Sigmoid colon (tissue), 7 donors: ENCODE measurements at regions of chr3 and their contacts with region 1.

Region 1: DNA sequence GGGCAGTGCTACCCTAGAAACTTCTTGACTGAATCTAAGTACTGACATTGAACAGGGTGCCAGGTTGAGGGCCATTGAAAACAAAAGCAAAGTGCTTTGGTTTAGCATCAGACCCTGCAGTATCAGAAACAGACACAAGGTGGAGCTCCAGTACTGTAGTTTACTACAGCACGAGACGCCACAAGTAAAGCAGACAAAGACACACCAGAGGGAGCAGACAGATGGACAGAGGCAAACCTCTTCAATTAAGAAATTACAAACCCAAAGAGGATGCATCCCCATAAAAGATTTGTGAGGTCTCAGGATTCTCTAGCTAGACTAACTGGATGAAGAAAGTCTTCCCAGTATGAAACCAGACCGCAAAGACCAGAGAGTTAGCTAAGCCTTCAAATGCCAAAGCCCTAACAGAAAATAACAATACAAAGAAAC is 16.6 kb downstream of the TOP2B start:
- DNase-seq: peak; percentile 73
- H3K4me3 ChIP-seq: no peak overlapping the region
- H3K27ac ChIP-seq: no peak overlapping the region
- H3K4me1 ChIP-seq: peaks cover 0 to 38% (median 8%) of the 10 kb centered on the region in 4 donors
- H3K27me3 ChIP-seq: no peaks in the 10 kb centered on the region
- CTCF ChIP-seq: peak; percentile 76 to 95 (median 86)
- EP300 ChIP-seq: no peak
- POLR2A ChIP-seq: no peak

Region 2: GRCh38 chr3:25468866-25469319 is 179.2 kb before region 1 on chr3:
- intact Hi-C with region 1: no loop called
- DNase-seq: peak; percentile 89
- H3K4me3 ChIP-seq: no peak overlapping the region
- H3K27ac ChIP-seq: peak overlapping the region in 3 of 4 donors; percentile 49 to 72 (median 71)
- H3K4me1 ChIP-seq: peaks cover 0 to 63% (median 57%) of the 10 kb centered on the region in 4 donors
- H3K27me3 ChIP-seq: no peaks in the 10 kb centered on the region
- CTCF ChIP-seq: peak in 1 of 4 experiments; percentile 35
- EP300 ChIP-seq: peak in 1 of 4 donors; percentile 28
- POLR2A ChIP-seq: no peak

Region 3: DNA sequence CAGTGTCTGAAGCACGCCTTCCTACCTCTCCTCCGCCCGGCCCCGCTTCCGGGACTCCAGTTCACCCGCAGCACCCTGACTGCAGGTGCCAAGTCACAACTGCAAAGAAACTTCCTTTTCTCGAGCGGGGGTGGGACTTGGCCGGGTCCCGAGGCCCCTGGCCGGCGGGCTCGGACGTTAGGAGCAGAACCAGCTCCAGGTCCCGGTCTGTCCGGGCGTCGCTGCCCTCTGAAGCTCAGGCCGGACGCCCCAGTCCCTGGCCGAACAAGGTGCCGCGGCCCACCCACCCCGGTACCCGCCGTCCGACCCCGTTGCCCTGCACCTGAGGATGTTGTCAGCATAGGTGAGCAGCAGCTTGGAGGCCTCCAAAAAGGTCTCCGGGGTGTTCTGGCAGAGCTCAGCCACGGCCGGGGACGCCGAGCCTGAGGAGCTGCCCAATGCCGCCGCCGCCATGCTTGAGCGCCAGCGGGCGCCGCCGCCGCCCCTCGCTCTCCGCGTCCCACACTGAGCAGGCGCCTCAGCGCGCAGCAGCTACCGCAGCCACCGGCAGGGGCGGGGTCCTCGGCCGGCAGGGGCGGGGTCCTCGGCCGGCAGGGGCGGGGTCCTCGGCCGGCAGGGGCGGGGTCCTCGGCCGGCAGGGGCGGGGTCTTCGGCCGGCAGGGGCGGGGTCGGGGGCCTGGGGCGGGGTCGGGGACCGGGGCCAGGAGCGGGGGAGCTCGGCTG is 135.0 kb after region 1 on chr3 and contains the start of gene NGLY1:
- intact Hi-C with region 1: loop called (anchors 5 kb)
- DNase-seq: peak; percentile 91
- H3K4me3 ChIP-seq: peak within 1 kb of the TSS; percentile 75 to 99 (median 95)
- H3K27ac ChIP-seq: peak within 1 kb of the TSS; percentile 86 to 91 (median 91)
- H3K4me1 ChIP-seq: peaks cover 0 to 29% (median 17%) of the 10 kb centered on the region in 4 donors
- H3K27me3 ChIP-seq: no peaks in the 10 kb centered on the region
- CTCF ChIP-seq: peak in 1 of 4 experiments; percentile 40
- EP300 ChIP-seq: no peak
- POLR2A ChIP-seq: peak; percentile 69 to 75
- total RNA-seq, gene NGLY1: 17.9 to 28.8 (median 26.0) TPM

Region 4: GRCh38 chr3:25856902-25857518 is 208.9 kb after region 1 on chr3:
- intact Hi-C with region 1: loop called (anchors 5 kb)
- DNase-seq: no peak
- H3K4me3 ChIP-seq: no peak overlapping the region
- H3K27ac ChIP-seq: no peak overlapping the region
- H3K4me1 ChIP-seq: peaks cover 0 to 23% (median 11%) of the 10 kb centered on the region in 4 donors
- H3K27me3 ChIP-seq: no peaks in the 10 kb centered on the region
- CTCF ChIP-seq: peak in 3 of 4 experiments; percentile 30 to 45 (median 38)
- EP300 ChIP-seq: no peak
- POLR2A ChIP-seq: no peak

Region 5: GRCh38 chr3:26712211-26713026 is 1064.3 kb after region 1 on chr3:
- intact Hi-C with region 1: loop called (anchors 5 kb)
- DNase-seq: no peak
- H3K4me3 ChIP-seq: no peak overlapping the region
- H3K27ac ChIP-seq: no peak overlapping the region
- H3K4me1 ChIP-seq: peaks cover 0 to 3% (median 0%) of the 10 kb centered on the region in 4 donors
- H3K27me3 ChIP-seq: no peaks in the 10 kb centered on the region
- CTCF ChIP-seq: peak; percentile 13 to 72 (median 51)
- EP300 ChIP-seq: no peak
- POLR2A ChIP-seq: no peak